Activated CD4-positive, alpha-beta T cell treated with anti-CD3 and anti-CD28 coated beads for 36 hours (primary cell): ENCODE measurements at regions of chr20 and their contacts with region 1.

Region 1: GRCh38 chr20:18287915-18288748 is at the start of gene ZNF133:
- DNase-seq: peak; percentile 97
- ATAC-seq: peak; percentile 98
- H3K4me3 Mint-ChIP-seq: peak within 1 kb of the TSS; percentile 98
- H3K27ac Mint-ChIP-seq: peak within 1 kb of the TSS; percentile 99
- H3K4me1 Mint-ChIP-seq: peaks cover 19% of the 10 kb centered on the region
- H3K27me3 Mint-ChIP-seq: peaks cover 14% of the 10 kb centered on the region
- total RNA-seq, gene ZNF133: 8.8 to 10.1 TPM

Region 2: GRCh38 chr20:17189976-17190695 is 1098.0 kb before region 1 on chr20:
- CTCF ChIA-PET with region 1: no interaction called
- POLR2A ChIA-PET with region 1: no interaction called
- intact Hi-C with region 1: no loop called
- DNase-seq: no peak
- ATAC-seq: no peak
- H3K4me3 Mint-ChIP-seq: no peak overlapping the region
- H3K27ac Mint-ChIP-seq: no peak overlapping the region
- H3K4me1 Mint-ChIP-seq: no peaks in the 10 kb centered on the region
- H3K27me3 Mint-ChIP-seq: no peaks in the 10 kb centered on the region

Region 3: GRCh38 chr20:17536944-17537444 is 751.1 kb before region 1 on chr20:
- CTCF ChIA-PET with region 1: no interaction called
- POLR2A ChIA-PET with region 1: no interaction called
- intact Hi-C with region 1: loop called in 1 of 2 experiments (anchors 10 kb)
- DNase-seq: peak; percentile 78
- ATAC-seq: peak; percentile 92
- H3K4me3 Mint-ChIP-seq: no peak overlapping the region
- H3K27ac Mint-ChIP-seq: no peak overlapping the region
- H3K4me1 Mint-ChIP-seq: peaks cover 14% of the 10 kb centered on the region
- H3K27me3 Mint-ChIP-seq: peaks cover 11% of the 10 kb centered on the region

Region 4: GRCh38 chr20:18137412-18138265 is 150.5 kb before region 1 on chr20 and contains the starts of genes KAT14 and PET117:
- CTCF ChIA-PET with region 1: interaction called, 4 read pairs
- POLR2A ChIA-PET with region 1: interaction called, 4 read pairs
- intact Hi-C with region 1: loop called (anchors 1 to 2 kb)
- DNase-seq: peak; percentile 94
- ATAC-seq: peak; percentile 91
- H3K4me3 Mint-ChIP-seq: peak within 1 kb of the TSS; percentile 74
- H3K27ac Mint-ChIP-seq: peak within 1 kb of the TSS; percentile 89
- H3K4me1 Mint-ChIP-seq: peaks cover 32% of the 10 kb centered on the region
- H3K27me3 Mint-ChIP-seq: peaks cover 1% of the 10 kb centered on the region
- total RNA-seq, gene KAT14: 17.2 to 17.9 TPM
- total RNA-seq, gene PET117: 12.0 to 18.7 TPM

Region 5: DNA sequence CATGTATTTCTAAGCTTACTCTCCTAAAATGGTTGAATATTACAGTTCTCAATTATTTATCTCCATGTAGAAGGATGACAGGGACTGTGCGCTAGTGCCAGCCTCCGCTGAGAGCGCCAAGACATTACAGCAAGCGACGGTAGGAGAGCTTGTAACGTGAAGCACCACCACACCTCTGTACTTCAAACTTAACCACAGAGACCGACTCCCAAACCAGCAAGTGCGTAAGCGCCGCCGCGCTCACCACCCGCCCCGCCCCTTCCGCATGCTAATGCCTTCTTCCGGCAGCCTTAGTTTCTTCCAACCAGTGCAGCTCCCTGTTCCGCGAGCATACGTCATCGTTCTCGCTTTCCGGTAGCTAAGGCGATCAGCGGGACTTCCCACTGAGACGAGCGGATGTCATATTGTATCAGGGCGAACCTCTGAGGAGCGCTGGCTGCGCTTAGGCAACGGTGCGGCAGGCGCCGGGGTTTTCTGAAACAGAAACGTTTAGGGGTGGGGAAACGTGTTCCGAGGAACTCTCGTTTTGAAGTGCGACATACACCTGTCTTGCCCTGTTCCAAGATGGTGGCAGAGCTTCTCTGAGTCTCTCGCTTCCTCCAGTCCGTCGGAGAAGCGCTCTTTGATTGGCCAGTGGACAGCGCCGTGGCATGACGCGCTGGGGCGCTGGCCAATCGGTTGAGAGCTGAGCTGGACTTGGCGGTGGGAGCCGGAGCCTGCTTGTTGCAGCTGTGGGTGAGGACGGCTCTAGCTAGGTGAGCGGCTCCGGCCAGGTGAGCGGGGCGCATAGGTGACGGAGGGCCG is 219.3 kb after region 1 on chr20 and contains the start of gene SEC23B:
- CTCF ChIA-PET with region 1: no interaction called
- POLR2A ChIA-PET with region 1: interaction called, 5 read pairs
- intact Hi-C with region 1: loop called (anchors 1 kb)
- DNase-seq: peak; percentile 99
- ATAC-seq: peak; percentile 94
- H3K4me3 Mint-ChIP-seq: peak within 1 kb of the TSS; percentile 99
- H3K27ac Mint-ChIP-seq: peak within 1 kb of the TSS; percentile 100
- H3K4me1 Mint-ChIP-seq: peaks cover 48% of the 10 kb centered on the region
- H3K27me3 Mint-ChIP-seq: no peaks in the 10 kb centered on the region
- total RNA-seq, gene SEC23B: 95.3 to 119 TPM

Region 6: DNA sequence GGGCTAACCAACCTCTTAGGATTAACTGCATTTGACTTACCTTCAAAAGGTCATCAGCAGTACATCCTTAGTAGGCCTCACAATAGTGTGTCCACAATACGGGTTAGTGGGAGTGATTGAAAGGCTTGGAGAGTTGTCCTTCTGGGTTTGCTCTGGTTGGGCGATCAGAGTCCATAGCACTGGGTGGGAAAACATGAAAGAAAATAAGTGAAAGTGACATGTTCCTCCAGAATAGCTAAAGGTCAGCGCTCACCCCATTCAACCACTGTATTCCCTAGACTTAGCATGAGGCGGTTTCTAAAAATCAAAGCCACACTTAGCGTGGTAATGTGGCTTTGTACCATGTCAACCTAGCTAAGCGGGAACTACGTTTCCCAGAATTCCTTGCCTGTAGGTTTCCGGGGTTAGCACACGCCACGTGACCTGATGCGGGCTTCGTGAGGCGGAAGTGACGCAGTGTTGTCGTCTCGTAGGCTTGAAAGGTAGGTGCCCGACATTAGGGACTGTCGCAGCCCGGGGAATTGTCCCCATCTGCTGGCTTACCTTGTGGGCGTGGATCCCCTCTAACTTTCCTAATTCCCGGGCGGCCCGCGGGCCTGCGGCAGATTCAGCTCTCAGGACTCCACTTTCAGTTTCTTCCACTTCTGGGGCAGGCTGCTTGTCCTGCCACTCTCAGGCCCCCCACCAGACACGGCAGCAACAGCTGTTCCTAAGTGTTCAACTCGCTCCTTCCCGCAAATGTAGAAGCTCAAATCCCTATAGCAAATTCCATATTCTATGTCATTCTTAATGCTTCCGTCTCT is 505.7 kb after region 1 on chr20:
- CTCF ChIA-PET with region 1: no interaction called
- POLR2A ChIA-PET with region 1: no interaction called
- intact Hi-C with region 1: loop called in 1 of 2 experiments (anchors 1 kb)
- DNase-seq: peak; percentile 92
- ATAC-seq: peak; percentile 98
- H3K4me3 Mint-ChIP-seq: peak overlapping the region; percentile 87
- H3K27ac Mint-ChIP-seq: peak overlapping the region; percentile 96
- H3K4me1 Mint-ChIP-seq: peaks cover 17% of the 10 kb centered on the region
- H3K27me3 Mint-ChIP-seq: peaks cover 7% of the 10 kb centered on the region